Posterior vena cava (tissue), 2 donors: ENCODE measurements at regions of chr6 and their contacts with region 1.

Region 1: DNA sequence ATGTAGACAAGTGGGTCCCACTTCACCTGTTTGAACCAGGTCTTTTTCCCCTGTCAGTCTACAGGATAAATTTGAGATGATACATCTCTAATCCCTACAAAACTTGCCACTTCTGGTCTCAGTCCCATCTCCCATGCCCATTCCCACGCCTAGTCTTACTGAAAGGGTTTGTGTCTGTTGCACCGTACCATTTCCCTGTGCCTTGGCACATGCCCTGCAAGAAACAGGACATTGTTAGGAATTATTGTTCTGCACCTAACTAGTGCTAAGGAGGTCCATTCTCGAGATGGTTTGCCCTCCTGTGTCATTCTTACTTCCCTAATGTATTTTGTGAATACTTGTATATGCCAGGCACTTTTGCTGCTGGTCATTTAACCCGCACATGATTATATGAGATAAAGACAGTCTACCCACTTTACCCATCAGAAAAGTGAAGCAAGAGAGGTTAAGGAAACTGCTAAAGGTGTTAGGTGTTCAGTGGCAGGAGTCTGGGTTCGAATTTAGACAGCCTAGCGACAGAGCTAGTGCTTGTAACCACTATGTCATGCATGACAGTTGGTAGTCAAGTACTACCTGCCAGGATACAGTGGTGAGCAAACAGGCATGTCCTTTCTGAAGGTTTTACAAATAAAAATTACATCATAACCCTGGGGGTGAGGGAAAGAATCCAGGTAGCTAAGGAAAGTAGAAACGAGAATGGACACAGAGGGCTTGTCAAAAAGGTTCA is 12.7 kb downstream of the FAM217A start:
- DNase-seq: no peak

Region 2: GRCh38 chr6:4155848-4156466 is 89.8 kb after region 1 on chr6:
- intact Hi-C with region 1: loop called in 1 of 2 experiments (anchors 10 kb)
- DNase-seq: peak; percentile 84